ENCODE measurements at regions of chr17 and their contacts with region 1.

Region 1: DNA sequence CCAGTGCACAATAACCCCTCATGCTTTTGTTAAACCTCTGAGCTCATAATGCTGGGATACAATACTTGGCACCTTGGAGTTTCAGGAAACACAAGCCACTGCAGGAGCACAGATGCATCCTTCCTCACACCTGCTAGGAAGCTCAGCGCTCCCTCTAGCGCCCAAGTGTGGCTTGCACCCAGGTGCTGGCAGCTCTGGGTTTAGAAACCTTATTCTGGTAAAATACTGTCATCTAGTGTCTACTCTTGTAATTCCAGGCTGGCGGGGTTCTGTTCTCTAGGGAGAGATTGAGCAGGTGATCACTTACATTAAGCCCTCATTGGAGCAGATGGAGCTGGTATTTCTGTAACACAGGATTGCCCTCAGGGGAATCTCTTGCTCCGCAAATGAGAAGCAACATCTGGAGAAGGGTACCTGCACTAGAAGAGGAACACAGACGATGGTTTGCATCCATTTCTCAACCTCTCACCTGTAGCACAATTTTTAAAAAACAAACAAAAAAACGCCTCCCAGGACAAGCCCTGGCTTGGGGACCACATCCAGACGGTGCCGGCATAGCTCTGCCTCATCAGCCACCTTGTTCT is 1.5 kb downstream of the CCL1 start:
- H3K4me3 ChIP-seq: no peak overlapping the region
- H3K27ac ChIP-seq: no peak overlapping the region
- H3K4me1 ChIP-seq: no peaks in the 10 kb centered on the region
- CTCF ChIP-seq: peak; percentile 97

Region 2: GRCh38 chr17:34081269-34081668 is 280.3 kb before region 1 on chr17:
- CTCF ChIA-PET with region 1: interaction called, 12 read pairs
- POLR2A ChIA-PET with region 1: no interaction called
- H3K4me3 ChIP-seq: no peak overlapping the region
- H3K27ac ChIP-seq: no peak overlapping the region
- H3K4me1 ChIP-seq: no peaks in the 10 kb centered on the region
- CTCF ChIP-seq: no peak

Region 3: DNA sequence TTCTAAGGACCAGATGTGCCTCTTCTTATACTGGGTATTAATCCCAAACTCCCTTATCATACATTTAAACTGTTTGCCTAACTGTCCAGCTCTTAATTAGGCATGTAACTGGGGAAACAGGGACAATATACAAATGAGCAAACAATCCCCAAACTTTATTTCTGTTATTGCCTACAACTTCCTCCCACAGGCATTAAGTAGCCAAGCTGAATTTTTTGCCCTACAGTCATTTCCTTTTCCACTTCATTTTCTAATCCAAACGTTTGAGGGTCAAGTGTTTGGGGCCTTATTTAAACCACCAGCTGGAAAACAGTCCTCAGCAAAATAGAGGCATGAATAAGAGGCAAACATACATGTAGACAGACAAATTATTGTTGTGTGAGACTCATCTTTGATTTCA is 183.9 kb before region 1 on chr17:
- CTCF ChIA-PET with region 1: interaction called, 176 read pairs
- POLR2A ChIA-PET with region 1: no interaction called
- H3K4me3 ChIP-seq: no peak overlapping the region
- H3K27ac ChIP-seq: no peak overlapping the region
- H3K4me1 ChIP-seq: no peaks in the 10 kb centered on the region
- CTCF ChIP-seq: no peak

Region 4: DNA sequence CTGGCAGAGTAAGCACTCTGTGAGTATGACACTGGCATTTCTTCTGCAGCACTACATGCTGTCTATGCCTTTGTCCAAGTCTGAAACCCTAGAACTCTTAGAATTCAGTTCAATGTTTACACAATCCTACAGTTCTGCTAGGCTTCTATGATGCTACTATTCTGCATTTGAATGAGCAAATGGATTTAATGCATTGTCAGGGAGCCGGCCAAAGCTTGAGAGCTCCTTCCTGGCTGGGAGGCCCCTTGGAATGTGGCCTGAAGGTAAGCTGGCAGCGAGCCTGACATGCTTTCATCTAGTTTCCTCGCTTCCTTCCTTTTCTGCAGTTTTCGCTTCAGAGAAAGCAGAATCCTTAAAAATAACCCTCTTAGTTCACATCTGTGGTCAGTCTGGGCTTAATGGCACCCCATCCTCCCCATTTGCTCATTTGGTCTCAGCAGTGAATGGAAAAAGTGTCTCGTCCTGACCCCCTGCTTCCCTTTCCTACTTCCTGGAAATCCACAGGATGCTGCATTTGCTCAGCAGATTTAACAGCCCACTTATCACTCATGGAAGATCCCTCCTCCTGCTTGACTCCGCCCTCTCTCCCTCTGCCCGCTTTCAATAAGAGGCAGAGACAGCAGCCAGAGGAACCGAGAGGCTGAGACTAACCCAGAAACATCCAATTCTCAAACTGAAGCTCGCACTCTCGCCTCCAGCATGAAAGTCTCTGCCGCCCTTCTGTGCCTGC is 106.8 kb before region 1 on chr17 and contains the start of gene CCL2:
- CTCF ChIA-PET with region 1: interaction called, 27 read pairs
- POLR2A ChIA-PET with region 1: no interaction called
- H3K4me3 ChIP-seq: peak within 1 kb of the TSS; percentile 49
- H3K27ac ChIP-seq: peak within 1 kb of the TSS; percentile 8; the same call in 1 of the 2 replicates
- H3K4me1 ChIP-seq: peaks cover 12% of the 10 kb centered on the region
- CTCF ChIP-seq: no peak

Region 5: GRCh38 chr17:34306466-34306865 is 55.1 kb before region 1 on chr17:
- CTCF ChIA-PET with region 1: interaction called, 206 read pairs
- POLR2A ChIA-PET with region 1: no interaction called
- H3K4me3 ChIP-seq: no peak overlapping the region
- H3K27ac ChIP-seq: no peak overlapping the region
- H3K4me1 ChIP-seq: no peaks in the 10 kb centered on the region
- CTCF ChIP-seq: no peak

Region 6: DNA sequence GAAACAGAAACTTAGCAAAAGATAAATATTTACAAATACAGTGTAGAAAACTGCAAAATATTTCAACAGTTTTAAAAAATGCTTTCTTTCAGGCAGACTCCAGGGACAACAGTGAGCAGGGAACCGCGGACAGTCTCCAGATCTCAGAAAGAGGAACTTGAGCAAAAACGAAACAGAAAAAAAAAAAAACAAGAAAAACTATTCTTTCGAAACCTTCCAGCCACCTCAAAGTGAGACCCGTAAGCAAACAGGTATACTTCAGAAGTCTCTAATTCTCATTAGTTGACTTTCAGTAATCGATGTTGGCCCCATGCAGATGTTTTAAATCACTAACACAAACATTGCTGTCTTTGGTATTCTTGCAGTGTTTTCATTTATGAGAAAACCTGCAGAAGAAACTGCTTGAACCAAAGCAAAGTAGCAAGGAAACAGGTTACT is 17.1 kb after region 1 on chr17:
- CTCF ChIA-PET with region 1: interaction called, 61 read pairs
- POLR2A ChIA-PET with region 1: no interaction called
- H3K4me3 ChIP-seq: no peak overlapping the region
- H3K27ac ChIP-seq: no peak overlapping the region
- H3K4me1 ChIP-seq: no peaks in the 10 kb centered on the region
- CTCF ChIP-seq: no peak

Region 7: GRCh38 chr17:34413443-34414119 is 52.0 kb after region 1 on chr17:
- CTCF ChIA-PET with region 1: interaction called, 10 read pairs
- POLR2A ChIA-PET with region 1: no interaction called
- H3K4me3 ChIP-seq: no peak overlapping the region
- H3K27ac ChIP-seq: no peak overlapping the region
- H3K4me1 ChIP-seq: peaks cover 2% of the 10 kb centered on the region; the same call in 1 of the 2 replicates
- CTCF ChIP-seq: no peak

Region 8: DNA sequence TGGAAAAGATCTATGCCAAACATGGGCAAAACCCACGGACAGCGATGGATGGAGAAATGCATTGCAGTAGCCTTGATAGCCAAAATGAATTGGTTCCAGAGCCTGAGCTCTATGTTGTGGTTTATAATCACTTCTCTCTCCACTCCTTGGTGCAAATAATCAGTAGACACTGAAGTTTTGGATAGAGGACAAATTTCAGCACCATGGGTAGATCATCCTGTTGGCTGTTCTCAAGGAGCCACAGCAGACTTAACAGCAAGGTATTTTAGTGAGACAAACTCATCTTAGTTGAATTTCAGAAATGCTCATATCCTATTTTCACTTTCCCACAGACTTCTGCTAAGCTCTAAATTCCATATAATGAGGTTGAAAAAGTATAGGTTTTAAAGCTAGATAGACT is 89.7 kb after region 1 on chr17:
- CTCF ChIA-PET with region 1: no interaction called
- POLR2A ChIA-PET with region 1: no interaction called
- H3K4me3 ChIP-seq: no peak overlapping the region
- H3K27ac ChIP-seq: no peak overlapping the region
- H3K4me1 ChIP-seq: no peaks in the 10 kb centered on the region
- CTCF ChIP-seq: no peak

Measured in HEK293 (cell line).